ENCODE measurements at regions of chr4 and their contacts with region 1.

Region 1: GRCh38 chr4:2468445-2469192 is at the start of gene RNF4:
- H3K4me3 Mint-ChIP-seq: peak within 1 kb of the TSS; percentile 97
- H3K27ac Mint-ChIP-seq: peak within 1 kb of the TSS; percentile 97
- H3K4me1 Mint-ChIP-seq: peaks cover 47% of the 10 kb centered on the region
- H3K27me3 Mint-ChIP-seq: peaks cover 8% of the 10 kb centered on the region

Region 2: GRCh38 chr4:2412885-2413716 is 55.5 kb before region 1 on chr4:
- intact Hi-C with region 1: loop called (anchors 2 kb)
- H3K4me3 Mint-ChIP-seq: peak overlapping the region; percentile 82
- H3K27ac Mint-ChIP-seq: peak overlapping the region; percentile 96
- H3K4me1 Mint-ChIP-seq: peaks cover 71% of the 10 kb centered on the region
- H3K27me3 Mint-ChIP-seq: peaks cover 26% of the 10 kb centered on the region

Region 3: DNA sequence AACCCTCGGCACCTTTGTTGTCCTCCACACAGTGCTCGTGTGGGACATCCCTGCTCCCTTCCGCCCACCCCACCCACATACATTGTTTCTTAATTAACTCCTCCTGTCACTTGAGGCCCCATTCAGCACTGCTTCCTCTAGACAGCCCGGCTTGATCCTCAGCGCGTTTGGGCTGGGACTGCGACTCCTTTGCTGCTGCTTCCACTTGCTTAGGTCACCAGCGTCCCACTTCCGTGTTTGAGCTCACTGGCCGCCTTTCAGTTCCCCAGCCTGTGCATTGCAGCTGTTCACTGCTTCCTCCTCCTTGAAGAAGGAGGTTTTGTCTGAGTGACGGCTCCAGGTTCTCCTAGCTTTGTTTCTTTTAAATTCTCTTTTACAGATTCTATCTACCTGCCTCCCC is 16.4 kb after region 1 on chr4:
- intact Hi-C with region 1: loop called (anchors 1 kb)
- H3K4me3 Mint-ChIP-seq: peak overlapping the region; percentile 64
- H3K27ac Mint-ChIP-seq: peak overlapping the region; percentile 68
- H3K4me1 Mint-ChIP-seq: peaks cover 85% of the 10 kb centered on the region
- H3K27me3 Mint-ChIP-seq: no peaks in the 10 kb centered on the region

Region 4: GRCh38 chr4:2497931-2498330 is 29.3 kb after region 1 on chr4:
- intact Hi-C with region 1: loop called (anchors 1 kb)
- H3K4me3 Mint-ChIP-seq: peak overlapping the region; percentile 58
- H3K27ac Mint-ChIP-seq: peak overlapping the region; percentile 85
- H3K4me1 Mint-ChIP-seq: peaks cover 49% of the 10 kb centered on the region
- H3K27me3 Mint-ChIP-seq: no peaks in the 10 kb centered on the region

Region 5: DNA sequence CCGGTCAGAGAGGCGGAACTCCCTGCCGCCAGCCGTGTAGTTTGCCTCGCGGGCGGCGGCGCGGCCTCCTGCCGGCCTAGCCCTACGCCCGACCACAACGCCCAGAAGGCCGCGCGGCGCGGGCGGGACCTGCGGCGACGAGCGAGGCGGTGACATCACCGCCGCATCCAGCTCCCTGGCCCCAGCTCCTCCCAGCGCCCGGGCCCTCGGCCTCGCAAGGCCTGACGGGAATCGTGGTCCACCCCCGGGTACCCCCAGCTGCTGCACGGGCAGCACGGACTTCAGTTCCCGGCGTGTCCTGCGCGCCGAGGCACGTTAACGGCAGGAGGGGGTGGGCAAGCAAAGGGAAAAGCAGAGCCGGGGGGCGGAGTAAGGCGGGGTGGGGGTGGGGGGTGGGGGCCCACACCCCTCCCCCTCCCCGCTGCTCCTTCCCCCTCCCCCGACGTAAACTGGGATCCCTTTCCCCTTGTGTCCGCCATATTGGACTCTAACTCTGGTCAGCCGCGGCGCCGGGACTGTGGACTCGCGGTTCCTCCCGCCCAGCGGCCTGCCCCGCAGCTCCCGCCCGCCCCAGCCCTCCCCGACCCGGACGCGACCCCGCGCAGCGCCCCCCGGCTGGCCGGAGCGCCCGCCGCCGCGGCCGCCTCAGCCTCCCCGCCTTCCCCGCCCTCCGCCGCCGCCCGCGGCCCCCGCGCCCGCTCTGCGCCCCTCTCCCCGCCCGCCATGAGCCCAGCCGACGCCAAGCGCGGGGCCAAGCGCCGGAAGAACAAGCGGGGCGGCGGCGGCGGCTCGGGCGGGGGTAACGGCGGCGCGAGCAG is 67.8 kb after region 1 on chr4 and contains the start of gene FAM193A:
- intact Hi-C with region 1: loop called (anchors 2 kb)
- H3K4me3 Mint-ChIP-seq: peak within 1 kb of the TSS; percentile 91
- H3K27ac Mint-ChIP-seq: peak within 1 kb of the TSS; percentile 93
- H3K4me1 Mint-ChIP-seq: peaks cover 24% of the 10 kb centered on the region
- H3K27me3 Mint-ChIP-seq: no peaks in the 10 kb centered on the region

Region 6: DNA sequence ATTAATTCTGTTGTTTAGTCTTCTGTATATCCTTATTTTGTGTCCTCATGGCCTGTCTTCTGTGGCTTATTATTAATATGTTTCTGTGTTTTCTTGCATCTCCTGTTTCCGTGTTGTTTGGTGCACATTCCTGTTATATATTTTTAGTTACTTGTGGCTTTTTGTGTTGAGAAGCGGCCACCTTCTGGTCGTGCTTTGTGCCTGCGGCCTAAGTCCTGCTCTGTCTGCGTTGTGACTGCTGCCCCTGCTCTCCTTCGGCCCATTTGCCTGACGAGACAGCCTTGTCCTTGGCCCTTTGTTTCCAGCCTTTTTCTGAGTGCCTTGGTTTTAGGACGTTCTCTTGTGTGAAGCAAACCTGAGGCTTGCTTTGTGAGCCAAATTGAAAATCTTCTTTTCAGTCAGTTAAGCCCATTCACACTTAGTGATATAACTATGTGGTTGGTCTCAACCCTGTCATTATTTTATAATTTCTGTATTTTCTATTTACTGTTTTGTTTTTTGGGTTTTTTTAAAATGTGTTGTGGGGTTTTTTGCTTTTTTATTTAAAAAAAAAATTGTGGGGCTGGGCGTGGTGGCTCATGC is 243.7 kb after region 1 on chr4:
- intact Hi-C with region 1: no loop called
- H3K4me3 Mint-ChIP-seq: no peak overlapping the region
- H3K27ac Mint-ChIP-seq: peak overlapping the region; percentile 12
- H3K4me1 Mint-ChIP-seq: peaks cover 16% of the 10 kb centered on the region
- H3K27me3 Mint-ChIP-seq: no peaks in the 10 kb centered on the region